OCI-LY7 (cell line): ENCODE measurements at regions of chr12 and their contacts with region 1.

Region 1: DNA sequence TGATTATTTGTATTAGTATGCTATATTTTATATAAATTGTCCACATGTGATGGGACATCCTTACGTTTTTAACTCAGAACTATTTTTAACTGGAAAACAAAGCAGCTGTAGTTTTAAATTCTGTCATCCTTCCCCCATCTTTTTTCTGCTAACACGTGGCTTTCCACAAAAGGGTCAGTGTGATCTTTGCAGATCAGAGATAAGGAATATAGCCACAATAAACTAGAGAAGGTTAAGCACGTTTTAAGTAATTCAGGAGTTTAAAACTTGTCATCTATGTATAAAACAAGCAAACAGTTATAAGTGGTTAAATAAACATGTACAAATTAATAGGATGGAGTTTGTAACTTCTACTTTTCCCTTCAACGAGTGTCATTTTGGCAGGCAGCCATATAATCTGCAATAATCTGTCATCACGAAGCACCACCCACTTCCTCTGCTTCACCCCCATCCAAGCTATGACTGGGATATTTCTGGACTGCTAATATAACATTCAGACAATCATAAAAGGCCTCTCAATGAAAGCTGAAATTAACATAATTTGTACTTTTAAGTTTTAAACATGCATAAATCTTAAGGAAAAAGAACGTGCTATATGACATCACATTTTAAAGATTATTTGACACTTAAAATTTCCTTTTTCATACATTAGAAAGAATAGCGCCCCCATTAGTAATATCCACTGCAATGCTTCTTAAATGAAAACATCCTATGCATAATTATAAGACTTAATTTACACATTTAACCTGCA is 15.3 kb downstream of the TAOK3 start:
- DNase-seq: peak; percentile 80
- H3K4me3 ChIP-seq: peak overlapping the region; percentile 75
- H3K27ac ChIP-seq: peak overlapping the region; percentile 70
- H3K4me1 ChIP-seq: peaks cover 30% of the 10 kb centered on the region
- CTCF ChIP-seq: peak; percentile 88

Region 2: GRCh38 chr12:118135788-118136558 is 221.5 kb before region 1 on chr12 and contains the start of gene PEBP1:
- CTCF ChIA-PET with region 1: no interaction called
- POLR2A ChIA-PET with region 1: interaction called, 3 read pairs
- intact Hi-C with region 1: loop called (anchors 2 kb)
- DNase-seq: peak; percentile 90
- H3K4me3 ChIP-seq: peak within 1 kb of the TSS; percentile 96
- H3K27ac ChIP-seq: peak within 1 kb of the TSS; percentile 14
- H3K4me1 ChIP-seq: peaks cover 18% of the 10 kb centered on the region
- CTCF ChIP-seq: no peak
- total RNA-seq, gene PEBP1: 128 and 135 TPM in 2 replicates

Region 3: DNA sequence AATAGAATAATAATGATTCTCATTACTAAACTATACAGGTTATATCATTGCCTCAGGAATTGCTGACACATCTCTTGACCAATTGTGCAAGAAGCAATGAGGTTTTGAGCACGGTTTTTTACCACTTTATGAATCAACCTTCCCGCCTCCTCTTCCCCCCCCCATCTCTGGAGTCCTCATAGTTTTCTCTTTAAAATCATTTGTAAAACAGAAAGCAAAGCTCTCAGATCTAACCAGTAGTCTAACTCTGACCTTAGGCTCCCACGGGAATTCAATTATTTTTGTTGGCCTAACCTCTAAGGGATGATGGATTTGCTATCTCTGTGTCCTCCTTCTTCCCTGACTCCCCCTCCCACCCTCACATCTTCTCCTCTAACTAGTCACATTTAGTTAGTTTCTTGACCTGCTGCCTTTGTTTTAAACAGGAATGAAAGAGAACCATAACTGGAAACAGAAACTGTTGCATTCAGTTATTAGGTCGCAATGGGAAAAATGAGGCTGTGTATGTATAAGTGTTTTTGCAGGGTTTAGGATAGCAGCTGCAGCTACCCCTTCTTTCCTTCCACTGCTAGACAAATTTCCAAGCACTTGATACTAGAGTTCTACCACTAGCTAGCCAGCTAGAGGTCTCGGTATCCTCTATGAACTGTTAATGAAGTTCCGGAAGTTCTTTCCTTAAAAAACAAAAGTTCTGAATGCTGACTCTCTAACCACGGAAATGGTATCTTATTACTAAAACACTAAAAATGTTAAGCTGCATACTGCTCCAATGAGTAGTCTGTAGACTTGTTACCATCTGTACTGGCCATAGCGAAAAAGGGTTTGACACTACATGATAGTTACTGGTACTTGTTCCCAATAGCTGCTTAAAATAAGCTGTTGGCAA is 50.1 kb before region 1 on chr12:
- CTCF ChIA-PET with region 1: no interaction called
- POLR2A ChIA-PET with region 1: no interaction called
- intact Hi-C with region 1: no loop called
- DNase-seq: no peak
- H3K4me3 ChIP-seq: no peak overlapping the region
- H3K27ac ChIP-seq: no peak overlapping the region
- H3K4me1 ChIP-seq: peaks cover 18% of the 10 kb centered on the region
- CTCF ChIP-seq: no peak

Region 4: GRCh38 chr12:118346895-118347294 is 10.5 kb before region 1 on chr12:
- CTCF ChIA-PET with region 1: no interaction called
- POLR2A ChIA-PET with region 1: interaction called, 22 read pairs
- intact Hi-C with region 1: no loop called
- DNase-seq: no peak
- H3K4me3 ChIP-seq: no peak overlapping the region
- H3K27ac ChIP-seq: no peak overlapping the region
- H3K4me1 ChIP-seq: peaks cover 27% of the 10 kb centered on the region
- CTCF ChIP-seq: no peak